CD8-positive, alpha-beta T cell (primary cell): ENCODE measurements at regions of chr6 and their contacts with region 1.

Region 1: DNA sequence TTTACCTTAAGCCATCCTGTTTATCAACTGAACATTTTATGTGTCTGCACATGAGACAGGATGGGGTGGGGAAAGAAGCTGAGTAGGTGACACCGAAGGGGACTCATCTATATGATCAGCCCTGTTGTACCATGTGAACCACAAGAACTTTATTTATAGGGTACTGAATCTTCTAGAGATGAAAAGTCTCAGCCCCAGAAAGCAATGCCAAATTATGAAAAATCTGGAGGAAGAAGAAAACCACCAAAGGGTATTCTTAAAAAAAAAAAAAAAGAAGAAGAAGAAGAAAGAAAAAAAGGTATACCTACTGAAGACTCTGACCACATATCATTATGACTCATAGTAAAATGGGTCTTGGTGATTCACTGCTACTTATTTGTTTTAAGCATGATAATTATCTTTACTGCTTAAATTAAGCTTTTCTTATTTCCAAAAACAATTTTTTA is 39.8 kb upstream of the HBS1L start:
- DNase-seq: peak in 7 of 9 experiments; percentile 27 to 79 (median 64)
- ATAC-seq: peak; percentile 95
- H3K4me3 ChIP-seq: no peak overlapping the region
- H3K4me3 Mint-ChIP-seq: peak overlapping the region; percentile 0
- H3K27ac ChIP-seq: peak overlapping the region; percentile 29 to 33
- H3K27ac Mint-ChIP-seq: peak overlapping the region; percentile 83
- H3K4me1 ChIP-seq: peaks cover 46% of the 10 kb centered on the region
- H3K4me1 Mint-ChIP-seq: peaks cover 68% of the 10 kb centered on the region
- H3K27me3 ChIP-seq: no peaks in the 10 kb centered on the region
- H3K27me3 Mint-ChIP-seq: no peaks in the 10 kb centered on the region
- CTCF ChIP-seq: no peak

Region 2: GRCh38 chr6:134247231-134247833 is 847.1 kb before region 1 on chr6:
- CTCF ChIA-PET with region 1: no interaction called
- POLR2A ChIA-PET with region 1: no interaction called
- intact Hi-C with region 1: loop called (anchors 10 kb)
- DNase-seq: peak; percentile 47 to 96 (median 68)
- ATAC-seq: peak; percentile 87
- H3K4me3 ChIP-seq: no peak overlapping the region
- H3K4me3 Mint-ChIP-seq: peak overlapping the region; percentile 54
- H3K27ac ChIP-seq: peak overlapping the region; percentile 20 to 76
- H3K27ac Mint-ChIP-seq: peak overlapping the region; percentile 92
- H3K4me1 ChIP-seq: peaks cover 63% of the 10 kb centered on the region
- H3K4me1 Mint-ChIP-seq: peaks cover 61% of the 10 kb centered on the region
- H3K27me3 ChIP-seq: no peaks in the 10 kb centered on the region
- H3K27me3 Mint-ChIP-seq: no peaks in the 10 kb centered on the region
- CTCF ChIP-seq: no peak

Region 3: DNA sequence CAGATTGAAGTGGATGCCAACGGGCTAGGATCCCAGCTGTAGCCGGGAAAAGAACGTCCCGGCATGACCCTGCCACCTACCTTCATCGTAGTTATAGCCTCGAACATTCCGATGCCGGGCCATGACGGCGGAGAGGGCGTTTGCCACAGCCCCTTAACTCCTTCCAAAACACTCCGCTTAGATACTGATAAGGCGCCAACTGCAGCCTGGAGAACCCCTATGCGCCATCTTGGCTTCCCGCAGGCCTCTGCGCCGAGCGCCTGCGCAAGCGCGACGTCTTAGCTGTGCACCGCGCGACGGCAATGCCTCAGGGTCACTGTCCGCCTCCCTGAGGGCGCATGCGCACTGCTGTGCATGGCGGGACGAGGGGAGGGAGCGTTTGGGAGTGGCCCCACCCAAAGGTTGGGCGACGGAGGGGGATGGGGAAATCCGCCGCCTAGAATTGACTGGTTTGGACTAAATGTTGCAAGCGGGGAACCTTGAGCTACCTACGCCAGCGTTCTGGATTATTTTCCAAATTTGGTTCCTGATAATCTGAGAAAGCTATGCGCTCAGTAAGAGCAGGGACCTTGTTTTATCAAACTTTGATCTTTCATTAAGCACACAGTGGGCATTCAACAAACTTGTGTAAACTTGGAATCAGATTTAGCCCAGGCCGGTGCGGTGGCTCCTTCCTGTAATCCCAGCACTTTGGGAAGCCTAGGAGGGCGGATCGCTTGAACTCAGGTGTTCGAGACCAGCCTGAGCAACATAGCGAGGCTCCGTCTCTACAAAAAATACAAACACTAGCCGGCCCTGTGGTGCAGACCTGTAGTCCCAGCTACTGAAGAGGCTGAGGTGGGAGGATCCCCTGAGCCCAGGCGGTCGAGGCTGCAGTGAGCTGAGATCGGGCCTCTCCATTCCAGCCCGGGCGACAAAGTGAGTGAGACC is 39.6 kb before region 1 on chr6 and contains the start of gene HBS1L:
- CTCF ChIA-PET with region 1: no interaction called
- POLR2A ChIA-PET with region 1: interaction called, 26 read pairs
- intact Hi-C with region 1: loop called in 1 of 2 experiments (anchors 1 kb)
- DNase-seq: peak; percentile 91 to 100 (median 96)
- ATAC-seq: peak; percentile 96
- H3K4me3 ChIP-seq: peak within 1 kb of the TSS; percentile 76 to 88
- H3K4me3 Mint-ChIP-seq: peak within 1 kb of the TSS; percentile 98
- H3K27ac ChIP-seq: peak within 1 kb of the TSS; percentile 87 to 90
- H3K27ac Mint-ChIP-seq: peak within 1 kb of the TSS; percentile 99
- H3K4me1 ChIP-seq: peaks cover 25% of the 10 kb centered on the region
- H3K4me1 Mint-ChIP-seq: peaks cover 42% of the 10 kb centered on the region
- H3K27me3 ChIP-seq: no peaks in the 10 kb centered on the region
- H3K27me3 Mint-ChIP-seq: no peaks in the 10 kb centered on the region
- CTCF ChIP-seq: no peak
- total RNA-seq, gene HBS1L: 119 to 123 TPM

Region 4: GRCh38 chr6:135105710-135106109 is 11.3 kb after region 1 on chr6:
- CTCF ChIA-PET with region 1: interaction called, 13 read pairs
- POLR2A ChIA-PET with region 1: interaction called, 29 read pairs
- intact Hi-C with region 1: loop called in 1 of 2 experiments (anchors 1 kb)
- DNase-seq: no peak
- ATAC-seq: no peak
- H3K4me3 ChIP-seq: no peak overlapping the region
- H3K4me3 Mint-ChIP-seq: no peak overlapping the region
- H3K27ac ChIP-seq: no peak overlapping the region
- H3K27ac Mint-ChIP-seq: peak overlapping the region; percentile 86
- H3K4me1 ChIP-seq: peaks cover 39% of the 10 kb centered on the region
- H3K4me1 Mint-ChIP-seq: peaks cover 64% of the 10 kb centered on the region
- H3K27me3 ChIP-seq: no peaks in the 10 kb centered on the region
- H3K27me3 Mint-ChIP-seq: no peaks in the 10 kb centered on the region
- CTCF ChIP-seq: no peak

Region 5: DNA sequence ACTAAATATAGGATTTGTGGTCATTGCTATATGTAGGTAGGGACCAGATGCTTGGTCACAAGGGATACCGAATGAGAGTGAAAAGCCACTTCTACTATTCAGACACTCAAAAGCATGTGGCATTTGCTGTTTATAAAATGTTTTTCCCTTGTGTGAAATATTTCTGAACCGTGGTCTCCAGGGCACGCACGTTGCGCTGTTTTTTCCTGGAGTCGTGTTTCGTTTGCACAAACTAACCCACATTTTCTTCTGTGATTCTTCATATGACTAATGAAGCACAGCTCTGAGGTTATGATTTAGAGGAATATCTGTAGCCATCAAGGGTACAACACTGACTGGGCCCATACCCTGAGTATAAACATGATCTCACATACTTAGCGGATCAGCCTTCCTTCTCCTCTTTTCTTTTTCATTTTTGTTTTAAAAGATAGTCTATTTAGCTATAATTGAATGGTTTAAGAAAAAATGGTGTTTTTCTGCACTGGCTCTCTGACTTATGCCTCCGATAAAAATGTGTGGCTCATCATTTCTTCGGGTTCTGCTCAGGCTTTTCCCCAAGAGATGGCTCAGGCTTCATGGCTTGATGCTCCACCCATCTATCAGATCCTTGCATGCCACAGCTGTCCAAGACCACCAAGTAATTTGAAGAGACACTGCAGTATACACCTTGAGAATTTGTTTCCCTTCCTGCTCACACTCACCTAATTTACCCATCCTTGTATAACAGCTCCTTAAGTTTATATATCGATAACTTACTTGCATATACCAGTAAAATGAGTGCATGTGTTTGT is 20.1 kb after region 1 on chr6:
- CTCF ChIA-PET with region 1: interaction called, 3 read pairs
- POLR2A ChIA-PET with region 1: interaction called, 9 read pairs
- intact Hi-C with region 1: loop called in 1 of 2 experiments (anchors 1 kb)
- DNase-seq: no peak
- ATAC-seq: peak; percentile 35
- H3K4me3 ChIP-seq: no peak overlapping the region
- H3K4me3 Mint-ChIP-seq: no peak overlapping the region
- H3K27ac ChIP-seq: no peak overlapping the region
- H3K27ac Mint-ChIP-seq: peak overlapping the region; percentile 29
- H3K4me1 ChIP-seq: peaks cover 40% of the 10 kb centered on the region
- H3K4me1 Mint-ChIP-seq: peaks cover 64% of the 10 kb centered on the region
- H3K27me3 ChIP-seq: no peaks in the 10 kb centered on the region
- H3K27me3 Mint-ChIP-seq: no peaks in the 10 kb centered on the region
- CTCF ChIP-seq: no peak